ENCODE measurements at regions of chr1 and their contacts with region 1.

Region 1: GRCh38 chr1:90067194-90067931 is 72.5 kb downstream of the ZNF326 start:
- DNase-seq: peak; percentile 96
- H3K4me3 ChIP-seq: no peak overlapping the region
- H3K27ac ChIP-seq: peak overlapping the region; percentile 95
- H3K4me1 ChIP-seq: peaks cover 55% of the 10 kb centered on the region
- H3K27me3 ChIP-seq: no peaks in the 10 kb centered on the region
- CTCF ChIP-seq: no peak

Region 2: DNA sequence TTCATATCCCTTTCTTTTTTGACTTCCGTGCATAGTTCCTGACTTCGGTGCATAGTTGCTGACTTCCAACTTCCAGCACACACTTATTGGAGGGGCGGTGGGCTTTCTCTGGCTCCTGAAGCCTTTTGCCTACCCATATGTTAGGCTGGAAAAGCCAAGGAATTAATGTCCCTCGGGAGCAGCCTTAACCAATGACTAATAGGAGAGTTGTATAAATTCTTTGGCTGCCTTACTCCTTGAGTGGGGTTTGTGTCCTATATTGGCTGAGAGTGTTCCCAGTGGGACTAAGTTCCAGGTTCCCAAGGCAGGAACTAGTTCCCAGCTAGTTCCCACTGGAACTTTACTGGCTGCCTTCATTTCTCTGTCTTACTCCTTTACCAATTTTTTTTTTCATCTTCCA is 33.2 kb after region 1 on chr1:
- CTCF ChIA-PET with region 1: no interaction called
- POLR2A ChIA-PET with region 1: no interaction called
- intact Hi-C with region 1: no loop called
- DNase-seq: no peak
- H3K4me3 ChIP-seq: no peak overlapping the region
- H3K27ac ChIP-seq: no peak overlapping the region
- H3K4me1 ChIP-seq: peaks cover 14% of the 10 kb centered on the region
- H3K27me3 ChIP-seq: no peaks in the 10 kb centered on the region
- CTCF ChIP-seq: no peak

Region 3: GRCh38 chr1:90616395-90616794 is 549.0 kb after region 1 on chr1:
- CTCF ChIA-PET with region 1: no interaction called
- POLR2A ChIA-PET with region 1: no interaction called
- intact Hi-C with region 1: loop called (anchors 5 kb)
- DNase-seq: peak; percentile 73
- H3K4me3 ChIP-seq: no peak overlapping the region
- H3K27ac ChIP-seq: no peak overlapping the region
- H3K4me1 ChIP-seq: peaks cover 32% of the 10 kb centered on the region
- H3K27me3 ChIP-seq: no peaks in the 10 kb centered on the region
- CTCF ChIP-seq: peak; percentile 70